Activated T-helper 1 cell treated with anti-CD3 and anti-CD28 coated beads, Interleukin-12 subunit alpha, Interleukin-12 subunit beta, Interleukin-2, Interleukin-4 antibody, amounts not matched to agents 30 ng/mL and 10 ng/mL and 1 ng/mL, durations not matched to agents 14 hours and 24 hours and 36 hours (primary cell): ENCODE measurements at regions of chr17 and their contacts with region 1.

Region 1: DNA sequence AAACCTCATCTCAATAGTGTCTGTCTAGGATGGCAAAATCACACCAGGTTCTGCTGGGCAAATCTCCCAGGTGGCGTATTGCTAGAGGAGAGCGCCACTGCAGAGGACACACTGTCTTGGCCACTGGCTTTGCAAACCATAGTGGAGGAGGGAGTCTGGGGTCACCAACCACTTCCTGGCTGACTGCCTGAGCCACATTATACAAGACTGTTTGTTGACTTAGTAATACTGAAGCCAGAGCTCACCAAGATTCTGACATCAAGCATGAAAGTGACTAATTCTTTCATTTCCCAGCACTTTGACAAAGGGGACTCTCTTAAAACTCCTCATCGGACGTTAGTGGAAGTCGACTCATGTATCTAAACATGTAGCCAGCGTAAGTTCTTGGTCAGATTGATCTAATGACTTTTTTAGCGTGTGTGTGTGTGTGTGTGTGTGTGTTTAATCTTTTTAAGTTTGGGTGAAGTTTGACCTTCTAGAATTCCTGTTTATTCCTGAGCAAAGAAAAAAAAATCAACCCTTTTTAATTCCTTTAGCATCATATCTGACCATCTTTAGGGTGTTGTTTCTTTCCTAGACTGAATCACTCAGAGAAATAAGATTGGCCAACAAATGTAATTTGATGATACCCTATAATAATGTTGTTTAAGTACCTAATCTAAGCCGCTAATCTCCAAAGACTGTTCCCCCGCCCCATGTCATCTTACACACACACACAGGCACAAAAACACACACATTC is 13.7 kb downstream of the PITPNC1 start:
- DNase-seq: peak; percentile 70
- H3K4me3 Mint-ChIP-seq: peak overlapping the region; percentile 65
- H3K27ac Mint-ChIP-seq: peak overlapping the region; percentile 89
- H3K4me1 Mint-ChIP-seq: peaks cover 55% of the 10 kb centered on the region
- H3K27me3 Mint-ChIP-seq: no peaks in the 10 kb centered on the region

Region 2: DNA sequence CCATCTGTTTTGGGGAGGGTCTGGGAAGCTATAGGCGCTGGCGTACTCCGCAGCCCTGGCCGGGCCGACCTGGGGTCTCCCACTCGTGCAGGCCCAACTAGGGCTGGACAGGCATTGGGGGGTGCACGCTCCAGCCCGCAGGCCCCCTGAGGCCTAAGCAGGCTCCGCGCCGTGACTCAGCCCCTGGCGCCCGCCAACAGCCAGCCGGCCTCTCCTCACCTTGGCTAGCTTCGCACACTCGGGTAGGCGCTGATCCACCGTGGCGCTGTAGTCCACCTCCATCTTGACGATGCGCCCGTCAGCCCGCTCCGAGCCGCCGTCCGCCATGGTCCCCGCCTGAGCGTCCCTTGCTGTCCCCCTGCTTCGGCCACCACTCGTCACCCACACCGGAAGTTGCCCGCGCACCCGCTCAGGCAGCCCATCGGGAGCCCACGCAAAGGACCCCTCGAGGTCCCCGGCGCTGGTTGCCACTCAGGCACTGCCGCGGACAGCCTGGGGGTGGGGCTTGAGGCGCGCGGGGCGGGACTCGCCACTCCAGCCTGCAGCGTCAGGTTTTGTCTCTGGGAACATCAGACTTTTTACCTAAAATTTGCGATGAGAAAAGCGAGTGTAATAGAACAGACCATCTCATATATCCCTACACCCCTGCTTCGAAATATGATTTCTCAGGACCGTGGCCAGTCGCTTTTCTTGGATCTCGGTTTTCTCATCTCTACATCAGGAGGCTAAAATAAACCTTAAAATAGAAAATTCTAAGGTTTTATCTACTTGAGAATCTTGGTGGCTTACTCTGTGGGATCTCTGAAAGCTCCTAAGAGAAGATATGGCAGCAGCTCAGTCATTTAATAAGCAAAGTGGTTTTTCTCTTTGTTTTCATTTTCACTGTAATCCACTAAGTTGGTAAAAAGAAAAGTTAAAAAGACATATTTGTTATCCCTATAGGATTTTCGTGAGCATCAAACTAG is 24.3 kb before region 1 on chr17 and contains the start of gene PSMD12:
- intact Hi-C with region 1: loop called (anchors 1 kb)
- DNase-seq: peak; percentile 92
- H3K4me3 Mint-ChIP-seq: peak within 1 kb of the TSS; percentile 96
- H3K27ac Mint-ChIP-seq: peak within 1 kb of the TSS; percentile 94
- H3K4me1 Mint-ChIP-seq: peaks cover 52% of the 10 kb centered on the region
- H3K27me3 Mint-ChIP-seq: no peaks in the 10 kb centered on the region
- total RNA-seq, gene PSMD12: 87.4 TPM in 2 replicates

Region 3: GRCh38 chr17:67421869-67422273 is 31.1 kb after region 1 on chr17:
- intact Hi-C with region 1: loop called (anchors 1 kb)
- DNase-seq: peak; percentile 64
- H3K4me3 Mint-ChIP-seq: peak overlapping the region; percentile 48
- H3K27ac Mint-ChIP-seq: peak overlapping the region; percentile 74
- H3K4me1 Mint-ChIP-seq: peaks cover 52% of the 10 kb centered on the region
- H3K27me3 Mint-ChIP-seq: no peaks in the 10 kb centered on the region

Region 4: DNA sequence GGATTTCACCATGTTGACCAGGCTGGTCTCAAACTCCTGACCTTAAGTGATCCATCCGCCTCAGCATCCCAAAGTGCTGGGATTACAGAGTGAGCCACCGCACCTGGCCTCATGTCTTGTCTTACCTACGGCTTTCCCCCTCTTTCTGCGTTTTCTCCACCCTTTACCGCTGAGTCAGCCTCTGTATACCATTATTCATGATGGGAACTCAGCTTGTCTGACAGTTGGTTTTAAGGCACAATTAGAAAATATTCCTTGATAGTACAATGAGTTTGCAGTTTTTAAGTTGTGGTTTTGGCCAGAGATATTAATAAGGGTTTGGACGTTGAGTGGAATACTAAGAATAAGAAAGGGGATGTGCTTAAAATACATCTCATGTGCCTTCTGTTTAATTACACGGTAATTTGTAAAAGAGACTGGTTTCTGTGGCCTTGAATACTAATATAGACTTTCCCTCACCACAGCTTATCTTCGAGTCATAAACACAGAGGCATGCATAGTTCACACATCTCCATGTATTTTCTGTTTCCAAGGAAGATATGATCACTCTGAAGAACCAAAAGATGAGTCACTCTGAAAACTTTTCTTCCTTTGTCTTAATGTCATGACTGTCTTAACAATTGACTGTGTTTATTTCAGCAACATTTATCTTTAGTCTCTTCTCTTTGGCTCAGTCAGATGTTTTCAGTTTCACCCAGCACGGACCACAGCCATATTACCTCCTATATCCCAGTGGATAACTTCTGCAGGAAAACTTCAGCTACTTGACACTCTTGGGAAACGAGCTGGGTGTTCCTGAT is 40.6 kb after region 1 on chr17:
- intact Hi-C with region 1: loop called (anchors 1 kb)
- DNase-seq: no peak
- H3K4me3 Mint-ChIP-seq: peak overlapping the region; percentile 46
- H3K27ac Mint-ChIP-seq: peak overlapping the region; percentile 85
- H3K4me1 Mint-ChIP-seq: peaks cover 51% of the 10 kb centered on the region
- H3K27me3 Mint-ChIP-seq: no peaks in the 10 kb centered on the region

Region 5: DNA sequence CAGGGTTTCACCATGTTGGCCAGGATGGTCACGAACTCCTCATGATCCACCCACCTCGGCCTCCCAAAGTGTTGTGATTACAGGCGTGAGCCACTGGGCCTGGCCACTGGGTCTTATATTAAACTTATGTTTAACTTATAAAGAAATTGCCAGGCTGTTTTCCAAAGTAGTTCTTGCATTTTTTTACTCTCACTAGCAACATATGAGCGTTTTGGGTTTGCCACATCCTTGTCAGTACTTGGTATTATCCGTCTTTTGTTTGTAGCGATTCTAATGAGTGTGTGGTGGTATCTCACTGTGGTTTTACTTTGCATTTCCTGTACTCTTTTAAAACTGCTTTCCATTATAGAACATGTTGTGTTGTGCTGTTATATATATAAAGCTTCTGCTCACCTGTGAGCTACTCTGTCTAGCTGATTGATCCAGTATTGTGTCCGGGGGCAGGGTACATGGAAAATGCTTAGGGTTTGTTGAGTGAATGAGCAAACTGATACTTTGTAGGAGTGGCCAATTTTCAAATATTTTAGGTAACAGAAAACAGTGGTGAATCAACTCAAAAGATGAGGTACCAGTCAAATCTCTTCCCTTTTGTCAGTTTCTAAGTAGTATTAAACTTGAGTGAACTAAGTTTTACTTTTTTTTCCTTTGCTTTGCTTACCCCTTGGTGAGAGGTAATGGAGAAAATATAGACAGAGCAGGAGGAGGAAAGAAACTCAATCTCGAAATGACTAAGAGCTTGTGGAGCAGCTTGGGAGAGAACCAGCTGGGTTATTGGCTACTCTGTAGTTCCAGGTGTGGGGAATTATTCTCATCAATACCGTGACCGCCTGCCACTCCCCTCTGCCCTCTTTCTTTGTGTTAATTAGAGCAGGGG is 62.1 kb after region 1 on chr17:
- intact Hi-C with region 1: loop called (anchors 1 kb)
- DNase-seq: peak; percentile 39
- H3K4me3 Mint-ChIP-seq: peak overlapping the region; percentile 48
- H3K27ac Mint-ChIP-seq: peak overlapping the region; percentile 95
- H3K4me1 Mint-ChIP-seq: peaks cover 69% of the 10 kb centered on the region
- H3K27me3 Mint-ChIP-seq: peaks cover 2% of the 10 kb centered on the region

Region 6: DNA sequence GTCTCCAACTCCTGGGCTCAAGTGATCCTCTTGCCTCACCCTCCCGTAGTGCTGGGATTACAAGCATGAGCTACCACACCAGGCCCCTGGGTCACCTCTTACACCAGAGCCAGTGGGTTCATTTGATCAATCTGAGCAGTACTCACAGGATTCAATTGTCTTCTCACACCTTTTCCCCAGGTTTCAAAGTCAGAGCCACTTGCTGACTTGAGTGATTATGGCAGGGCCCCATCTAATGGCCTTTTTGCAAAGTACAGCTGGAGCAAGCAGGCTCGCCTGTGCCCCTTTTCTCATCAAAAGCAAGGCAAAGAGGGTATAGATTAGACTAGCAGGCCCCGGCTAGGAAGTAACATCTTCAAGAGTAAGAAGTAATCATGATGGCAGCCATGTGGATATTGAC is 212.1 kb after region 1 on chr17:
- intact Hi-C with region 1: loop called (anchors 1 kb)
- DNase-seq: peak; percentile 16
- H3K4me3 Mint-ChIP-seq: no peak overlapping the region
- H3K27ac Mint-ChIP-seq: no peak overlapping the region
- H3K4me1 Mint-ChIP-seq: no peaks in the 10 kb centered on the region
- H3K27me3 Mint-ChIP-seq: no peaks in the 10 kb centered on the region